ENCODE measurements at regions of chr9 and their contacts with region 1.

Region 1: GRCh38 chr9:95494416-95495371 is 22.1 kb downstream of the PTCH1 start:
- DNase-seq: no peak
- H3K4me3 ChIP-seq: no peak overlapping the region
- H3K27ac ChIP-seq: no peak overlapping the region
- H3K4me1 ChIP-seq: peaks cover 8 to 29% (median 22%) of the 10 kb centered on the region in 4 experiments
- H3K27me3 ChIP-seq: no peaks in the 10 kb centered on the region
- CTCF ChIP-seq: no peak
- EP300 ChIP-seq: no peak
- POLR2A ChIP-seq: no peak
- RAD21 ChIP-seq: no peak

Region 2: GRCh38 chr9:95508968-95509850 is 14.5 kb after region 1 on chr9:
- CTCF ChIA-PET with region 1: no interaction called
- POLR2A ChIA-PET with region 1: interaction called, 16 read pairs
- DNase-seq: peak; percentile 82 to 92
- H3K4me3 ChIP-seq: peak overlapping the region; percentile 53 to 94 (median 81)
- H3K27ac ChIP-seq: 0 out of 2 replicates have a peak overlapping the region, but pooled peaks have one; percentile 24
- H3K4me1 ChIP-seq: peaks cover 10 to 32% (median 14%) of the 10 kb centered on the region in 4 experiments; a peak in 6 of 7 replicates
- H3K27me3 ChIP-seq: peaks cover 11 to 19% (median 17%) of the 10 kb centered on the region in 4 experiments
- CTCF ChIP-seq: no peak
- EP300 ChIP-seq: no peak
- POLR2A ChIP-seq: no peak
- RAD21 ChIP-seq: peak in 1 of 2 experiments; percentile 8; a peak in 1 of 4 replicates

Measured in H1 (cell line).